ENCODE measurements at regions of chr3 and their contacts with region 1.

Region 1: DNA sequence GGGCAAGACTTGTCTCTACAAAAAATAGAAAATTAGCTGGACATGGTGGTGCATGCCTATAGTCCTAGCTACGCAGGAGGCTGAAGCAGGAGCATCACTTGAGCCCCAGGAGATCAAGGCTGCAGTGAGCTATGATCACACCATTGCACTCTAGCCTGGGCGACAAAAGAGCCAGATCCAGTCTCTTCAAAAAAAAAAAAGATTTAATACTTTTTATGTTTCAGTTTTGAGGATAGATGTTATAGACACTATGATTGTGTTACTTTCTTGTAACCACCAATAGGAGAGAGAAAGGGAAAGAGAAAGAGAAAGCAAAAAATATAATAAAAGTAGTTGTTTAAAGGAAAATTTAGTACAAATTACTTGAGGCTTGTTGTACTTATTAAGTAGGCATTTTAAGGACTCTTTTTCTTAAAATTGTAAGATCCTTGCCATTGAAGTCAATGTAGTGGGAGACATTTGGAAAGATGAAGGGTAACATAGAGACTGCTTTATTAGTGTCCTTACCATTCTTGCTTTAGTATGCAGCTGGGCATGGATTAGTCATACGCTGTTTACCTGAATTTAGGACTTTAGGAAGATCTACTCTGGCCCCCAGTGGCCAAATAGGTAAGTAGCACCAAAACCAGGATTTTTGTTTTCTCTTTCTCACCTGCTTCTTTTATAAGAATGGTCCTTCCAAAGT is 35.1 kb upstream of the ZDHHC23 start:
- DNase-seq: peak; percentile 26
- H3K4me3 ChIP-seq: no peak overlapping the region
- H3K27ac ChIP-seq: peak overlapping the region in 2 of 4 donors; percentile 28 to 30
- H3K4me1 ChIP-seq: peaks cover 0 to 6% (median 2%) of the 10 kb centered on the region in 4 donors
- H3K27me3 ChIP-seq: no peaks in the 10 kb centered on the region
- CTCF ChIP-seq: peak; percentile 48 to 76 (median 59)
- EP300 ChIP-seq: no peak
- POLR2A ChIP-seq: no peak

Region 2: DNA sequence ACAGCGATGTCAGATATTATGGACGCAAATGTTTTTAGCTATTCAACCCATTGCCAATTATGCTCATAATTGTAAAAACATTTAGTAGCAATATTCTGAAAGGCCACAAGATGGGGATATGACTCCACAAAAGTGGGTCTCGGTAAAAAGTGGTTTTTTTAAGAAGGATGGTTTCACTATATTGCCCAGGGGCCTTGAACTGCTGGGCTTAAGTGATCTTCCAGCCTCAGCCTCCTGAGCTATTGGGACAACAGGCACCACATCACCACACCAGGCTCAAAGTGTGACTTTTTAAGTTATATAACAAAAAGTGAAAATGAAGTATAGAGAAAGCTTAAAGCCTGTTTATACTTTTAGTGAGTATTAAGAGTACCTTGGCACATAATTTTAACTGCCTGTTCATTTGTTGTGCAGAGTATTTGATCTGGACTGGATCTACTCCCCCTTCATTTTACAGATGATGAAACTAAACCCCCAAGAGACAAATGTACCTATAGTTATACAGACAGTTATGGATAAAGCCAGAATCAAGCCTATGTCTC is 176.1 kb before region 1 on chr3:
- in situ Hi-C with region 1: loop called in 1 of 4 experiments (anchors 10 kb)
- intact Hi-C with region 1: no loop called
- DNase-seq: no peak
- H3K4me3 ChIP-seq: no peak overlapping the region
- H3K27ac ChIP-seq: peak overlapping the region in 2 of 4 donors; percentile 19 to 21
- H3K4me1 ChIP-seq: peaks cover 0 to 56% (median 4%) of the 10 kb centered on the region in 4 donors
- H3K27me3 ChIP-seq: no peaks in the 10 kb centered on the region
- CTCF ChIP-seq: peak; percentile 55 to 80 (median 64)
- EP300 ChIP-seq: no peak
- POLR2A ChIP-seq: no peak

Region 3: DNA sequence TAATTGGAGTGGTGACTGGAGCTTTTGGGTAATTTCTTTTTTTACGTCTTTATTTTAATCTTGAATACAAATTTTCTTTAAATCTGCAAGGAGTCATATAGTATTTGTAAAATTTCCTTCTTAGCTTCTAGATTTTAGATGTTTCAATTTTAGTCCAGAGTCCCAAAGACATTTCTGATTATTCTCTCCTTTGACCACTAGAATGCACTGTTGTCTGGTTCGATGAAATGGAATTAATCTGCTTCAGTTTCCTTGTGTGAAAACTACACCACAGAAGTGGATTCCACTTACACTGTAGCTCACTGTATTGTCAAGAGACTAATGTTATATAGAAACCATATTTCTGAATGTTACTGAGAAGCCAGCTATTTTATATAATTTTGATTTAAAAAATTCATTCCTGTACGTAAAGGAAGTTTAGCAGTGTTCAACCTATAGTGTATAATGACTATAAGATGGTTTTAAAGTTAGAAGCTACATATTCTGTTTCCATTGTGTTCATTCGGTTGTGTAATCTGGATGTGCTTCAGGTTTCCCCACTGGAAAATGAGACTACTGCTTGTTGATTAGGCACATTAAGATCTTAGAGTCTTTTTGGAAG is 68.0 kb before region 1 on chr3:
- in situ Hi-C with region 1: loop called in 2 of 4 experiments (anchors 5 to 10 kb)
- intact Hi-C with region 1: no loop called
- DNase-seq: no peak
- H3K4me3 ChIP-seq: no peak overlapping the region
- H3K27ac ChIP-seq: peak overlapping the region in 2 of 4 donors; percentile 5 to 21
- H3K4me1 ChIP-seq: peaks cover 0 to 19% (median 8%) of the 10 kb centered on the region in 4 donors
- H3K27me3 ChIP-seq: no peaks in the 10 kb centered on the region
- CTCF ChIP-seq: peak; percentile 49 to 65 (median 53)
- EP300 ChIP-seq: no peak
- POLR2A ChIP-seq: no peak

Measured in transverse colon (tissue), 4 donors.